ENCODE measurements at regions of chr2 and their contacts with region 1.

Region 1: DNA sequence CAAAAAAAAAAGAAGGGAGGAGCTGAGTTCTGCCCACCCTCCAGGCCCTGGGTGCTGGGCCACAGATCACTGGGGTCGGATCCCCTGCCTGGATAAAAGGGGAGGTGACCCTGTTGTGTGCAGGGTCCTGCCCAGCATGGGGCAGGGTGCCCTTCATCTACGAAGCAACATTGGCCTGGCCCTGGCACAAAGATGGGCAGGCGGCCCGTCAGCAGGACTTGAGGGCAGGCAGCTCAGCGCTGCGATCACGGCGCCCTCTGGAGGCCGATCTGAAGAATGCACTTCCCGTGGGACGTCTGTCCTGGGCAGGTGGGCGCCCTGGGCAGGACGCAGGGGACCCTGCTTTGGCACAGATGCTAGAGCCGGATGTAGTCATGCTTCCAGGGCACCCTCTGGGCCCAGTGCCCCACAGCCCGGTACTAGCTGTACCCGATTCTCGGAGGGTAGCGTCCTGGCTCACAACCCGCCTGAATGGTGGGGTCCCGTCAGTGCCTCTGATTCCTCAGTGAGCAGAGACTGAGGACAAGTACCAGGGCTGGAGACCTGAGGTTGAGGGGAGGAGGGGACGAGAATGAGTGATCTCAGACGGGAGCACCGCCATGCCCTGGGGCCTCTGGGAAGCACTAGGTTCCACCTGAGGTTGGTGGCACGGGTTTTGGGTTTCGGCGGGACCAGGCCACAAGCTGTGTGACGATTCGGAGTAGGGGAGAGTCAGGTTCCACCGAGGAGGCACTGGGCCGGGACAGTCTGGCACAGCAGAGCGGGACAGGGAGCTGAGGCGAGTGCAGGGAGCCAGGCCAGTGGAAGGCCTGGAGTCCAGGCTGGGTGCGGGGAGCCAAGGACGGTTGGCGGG is 18.0 kb downstream of the ARID5A start:
- DNase-seq: peak; percentile 46 to 86 (median 71)
- ATAC-seq: peak; percentile 60
- H3K4me3 ChIP-seq: peak overlapping the region in 1 of 2 experiments; percentile 1
- H3K4me3 Mint-ChIP-seq: peak overlapping the region; percentile 29
- H3K27ac ChIP-seq: no peak overlapping the region
- H3K27ac Mint-ChIP-seq: peak overlapping the region; percentile 62
- H3K4me1 ChIP-seq: peaks cover 16% of the 10 kb centered on the region
- H3K4me1 Mint-ChIP-seq: peaks cover 17% of the 10 kb centered on the region
- H3K27me3 ChIP-seq: no peaks in the 10 kb centered on the region
- H3K27me3 Mint-ChIP-seq: no peaks in the 10 kb centered on the region
- CTCF ChIP-seq: peak; percentile 86

Region 2: DNA sequence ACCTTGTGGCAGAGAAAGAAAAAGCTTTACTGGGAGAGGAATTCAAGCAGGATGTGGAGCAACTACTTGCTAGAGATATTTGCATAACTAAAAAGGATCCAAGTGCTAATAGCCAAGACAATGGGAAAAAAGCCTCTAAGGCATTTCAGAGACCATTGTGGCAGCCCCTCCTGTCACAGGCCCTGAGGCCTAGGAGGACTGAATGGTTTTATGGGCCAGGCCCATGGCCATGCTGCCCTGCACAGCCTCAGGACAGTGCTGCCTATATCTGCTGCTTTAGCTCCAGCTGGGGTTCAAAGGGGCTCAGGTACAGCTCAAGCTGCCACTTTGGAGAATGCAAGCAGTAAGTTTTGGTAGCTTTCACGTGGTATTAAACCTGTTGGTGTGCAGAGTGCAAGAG is 1415.8 kb before region 1 on chr2:
- CTCF ChIA-PET with region 1: no interaction called
- POLR2A ChIA-PET with region 1: no interaction called
- intact Hi-C with region 1: no loop called
- DNase-seq: no peak
- ATAC-seq: no peak
- H3K4me3 ChIP-seq: no peak overlapping the region
- H3K4me3 Mint-ChIP-seq: no peak overlapping the region
- H3K27ac ChIP-seq: no peak overlapping the region
- H3K27ac Mint-ChIP-seq: no peak overlapping the region
- H3K4me1 ChIP-seq: no peaks in the 10 kb centered on the region
- H3K4me1 Mint-ChIP-seq: no peaks in the 10 kb centered on the region
- H3K27me3 ChIP-seq: no peaks in the 10 kb centered on the region
- H3K27me3 Mint-ChIP-seq: no peaks in the 10 kb centered on the region
- CTCF ChIP-seq: no peak

Region 3: GRCh38 chr2:96359310-96359709 is 195.2 kb before region 1 on chr2:
- CTCF ChIA-PET with region 1: interaction called, 9 read pairs
- POLR2A ChIA-PET with region 1: no interaction called
- intact Hi-C with region 1: loop called (anchors 1 to 2 kb)
- DNase-seq: peak; percentile 25 to 74 (median 58)
- ATAC-seq: peak; percentile 90
- H3K4me3 ChIP-seq: no peak overlapping the region
- H3K4me3 Mint-ChIP-seq: no peak overlapping the region
- H3K27ac ChIP-seq: no peak overlapping the region
- H3K27ac Mint-ChIP-seq: no peak overlapping the region
- H3K4me1 ChIP-seq: no peaks in the 10 kb centered on the region
- H3K4me1 Mint-ChIP-seq: peaks cover 3% of the 10 kb centered on the region
- H3K27me3 ChIP-seq: no peaks in the 10 kb centered on the region
- H3K27me3 Mint-ChIP-seq: no peaks in the 10 kb centered on the region
- CTCF ChIP-seq: no peak

Region 4: GRCh38 chr2:96470636-96471035 is 83.9 kb before region 1 on chr2:
- CTCF ChIA-PET with region 1: interaction called, 3 read pairs
- POLR2A ChIA-PET with region 1: no interaction called
- intact Hi-C with region 1: loop called (anchors 1 to 2 kb)
- DNase-seq: peak in 8 of 9 experiments; percentile 36 to 66 (median 58)
- ATAC-seq: peak; percentile 73
- H3K4me3 ChIP-seq: no peak overlapping the region
- H3K4me3 Mint-ChIP-seq: no peak overlapping the region
- H3K27ac ChIP-seq: no peak overlapping the region
- H3K27ac Mint-ChIP-seq: no peak overlapping the region
- H3K4me1 ChIP-seq: peaks cover 4% of the 10 kb centered on the region
- H3K4me1 Mint-ChIP-seq: peaks cover 2% of the 10 kb centered on the region
- H3K27me3 ChIP-seq: no peaks in the 10 kb centered on the region
- H3K27me3 Mint-ChIP-seq: peaks cover 6% of the 10 kb centered on the region
- CTCF ChIP-seq: peak; percentile 64

Region 5: GRCh38 chr2:96509114-96509846 is 45.2 kb before region 1 on chr2:
- CTCF ChIA-PET with region 1: interaction called, 32 read pairs
- POLR2A ChIA-PET with region 1: no interaction called
- intact Hi-C with region 1: loop called (anchors 1 kb)
- DNase-seq: peak in 8 of 9 experiments; percentile 35 to 73 (median 56)
- ATAC-seq: no peak
- H3K4me3 ChIP-seq: no peak overlapping the region
- H3K4me3 Mint-ChIP-seq: no peak overlapping the region
- H3K27ac ChIP-seq: no peak overlapping the region
- H3K27ac Mint-ChIP-seq: no peak overlapping the region
- H3K4me1 ChIP-seq: peaks cover 17% of the 10 kb centered on the region
- H3K4me1 Mint-ChIP-seq: peaks cover 10% of the 10 kb centered on the region
- H3K27me3 ChIP-seq: peaks cover 0 to 5% of the 10 kb centered on the region in 2 experiments
- H3K27me3 Mint-ChIP-seq: peaks cover 13% of the 10 kb centered on the region
- CTCF ChIP-seq: peak; percentile 45

Region 6: DNA sequence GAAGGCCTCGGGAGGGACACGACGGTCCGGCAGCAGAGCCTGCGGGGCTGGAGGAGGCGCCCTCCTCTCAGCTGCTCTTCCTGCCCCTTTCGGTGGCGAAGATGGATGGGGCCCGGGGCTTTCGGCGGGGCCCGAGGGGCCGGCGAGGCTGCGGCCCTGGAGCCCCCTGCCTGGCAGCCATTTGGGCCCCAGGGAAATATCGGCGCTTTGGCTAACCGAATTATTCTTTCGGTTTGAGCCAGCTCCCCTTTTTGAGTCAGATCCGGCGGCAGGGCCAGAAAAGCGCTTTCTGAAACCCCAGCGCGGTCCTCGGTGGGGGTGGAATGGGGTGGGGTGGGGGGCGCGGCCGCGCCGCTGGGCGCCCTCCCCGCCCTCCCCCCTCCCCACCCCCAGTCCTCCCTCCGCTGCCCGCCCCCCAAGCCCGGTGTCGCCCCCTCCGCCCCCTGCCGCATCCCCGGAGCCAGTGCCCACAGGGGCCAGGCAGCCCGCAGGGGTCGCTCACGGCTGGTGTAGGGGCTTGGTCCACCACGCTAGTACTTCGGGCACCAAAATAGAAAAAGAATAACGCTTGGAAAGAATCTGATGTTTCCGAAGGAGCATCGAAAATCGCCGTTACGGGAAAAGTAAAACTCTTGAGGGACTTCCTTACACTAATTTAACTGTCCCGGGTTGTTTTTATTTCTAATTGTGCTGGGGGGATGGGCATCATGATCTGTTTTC is 27.1 kb before region 1 on chr2:
- CTCF ChIA-PET with region 1: interaction called, 149 read pairs
- POLR2A ChIA-PET with region 1: interaction called, 6 read pairs
- intact Hi-C with region 1: loop called (anchors 1 kb)
- DNase-seq: peak in 7 of 9 experiments; percentile 40 to 77 (median 62)
- ATAC-seq: no peak
- H3K4me3 ChIP-seq: peak overlapping the region; percentile 61 to 63
- H3K4me3 Mint-ChIP-seq: peak overlapping the region; percentile 84
- H3K27ac ChIP-seq: peak overlapping the region; percentile 32 to 50
- H3K27ac Mint-ChIP-seq: peak overlapping the region; percentile 67
- H3K4me1 ChIP-seq: peaks cover 36% of the 10 kb centered on the region
- H3K4me1 Mint-ChIP-seq: peaks cover 43% of the 10 kb centered on the region
- H3K27me3 ChIP-seq: no peaks in the 10 kb centered on the region
- H3K27me3 Mint-ChIP-seq: no peaks in the 10 kb centered on the region
- CTCF ChIP-seq: peak; percentile 38

Region 7: GRCh38 chr2:96564563-96564962 is 10.0 kb after region 1 on chr2:
- CTCF ChIA-PET with region 1: interaction called, 11 read pairs
- POLR2A ChIA-PET with region 1: no interaction called
- intact Hi-C with region 1: no loop called
- DNase-seq: no peak
- ATAC-seq: no peak
- H3K4me3 ChIP-seq: no peak overlapping the region
- H3K4me3 Mint-ChIP-seq: no peak overlapping the region
- H3K27ac ChIP-seq: no peak overlapping the region
- H3K27ac Mint-ChIP-seq: no peak overlapping the region
- H3K4me1 ChIP-seq: no peaks in the 10 kb centered on the region
- H3K4me1 Mint-ChIP-seq: no peaks in the 10 kb centered on the region
- H3K27me3 ChIP-seq: no peaks in the 10 kb centered on the region
- H3K27me3 Mint-ChIP-seq: no peaks in the 10 kb centered on the region
- CTCF ChIP-seq: no peak

Measured in CD8-positive, alpha-beta T cell (primary cell).